B cell (primary cell): ENCODE measurements at regions of chr6 and their contacts with region 1.

Region 1: GRCh38 chr6:33271458-33272274 is at the starts of genes RPS18 and VPS52:
- DNase-seq: peak; percentile 99
- ATAC-seq: peak; percentile 86
- H3K4me3 ChIP-seq: peak within 1 kb of the TSS; percentile 81 to 95 (median 86)
- H3K4me3 Mint-ChIP-seq: peak within 1 kb of the TSS; percentile 94
- H3K27ac ChIP-seq: peak within 1 kb of the TSS; percentile 89 to 94
- H3K27ac Mint-ChIP-seq: peak within 1 kb of the TSS; percentile 99
- H3K4me1 ChIP-seq: peaks cover 47 to 54% of the 10 kb centered on the region in 2 donors
- H3K4me1 Mint-ChIP-seq: peaks cover 62% of the 10 kb centered on the region
- H3K27me3 ChIP-seq: no peaks in the 10 kb centered on the region
- H3K27me3 Mint-ChIP-seq: no peaks in the 10 kb centered on the region
- CTCF ChIP-seq: no peak
- total RNA-seq, gene RPS18: 3,593 and 3,830 TPM in 2 replicates
- total RNA-seq, gene VPS52: 100 and 108 TPM in 2 replicates

Region 2: DNA sequence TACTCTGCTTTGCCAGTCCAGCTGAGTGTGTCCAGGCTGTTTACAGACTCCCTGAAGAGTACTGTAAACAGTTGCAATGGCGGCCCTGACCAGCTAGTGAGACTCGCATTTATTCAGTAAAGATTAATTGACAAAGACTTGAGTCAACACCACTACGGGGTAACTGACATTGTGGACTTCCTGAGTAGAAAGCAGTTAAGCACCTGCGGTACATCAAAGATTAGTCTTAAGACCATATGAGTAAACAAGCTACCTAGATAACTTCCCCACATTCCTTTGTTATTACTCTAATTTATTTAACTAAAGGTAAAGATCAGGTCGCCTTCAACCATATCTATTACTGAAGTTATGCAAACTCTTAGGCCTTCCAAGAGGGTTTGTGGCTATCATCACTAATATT is 12.6 kb before region 1 on chr6:
- CTCF ChIA-PET with region 1: interaction called, 3 read pairs
- POLR2A ChIA-PET with region 1: interaction called, 17 read pairs
- intact Hi-C with region 1: no loop called
- DNase-seq: no peak
- ATAC-seq: no peak
- H3K4me3 ChIP-seq: no peak overlapping the region
- H3K4me3 Mint-ChIP-seq: no peak overlapping the region
- H3K27ac ChIP-seq: no peak overlapping the region
- H3K27ac Mint-ChIP-seq: no peak overlapping the region
- H3K4me1 ChIP-seq: no peaks in the 10 kb centered on the region
- H3K4me1 Mint-ChIP-seq: no peaks in the 10 kb centered on the region
- H3K27me3 ChIP-seq: no peaks in the 10 kb centered on the region
- H3K27me3 Mint-ChIP-seq: no peaks in the 10 kb centered on the region
- CTCF ChIP-seq: no peak

Region 3: GRCh38 chr6:33299237-33299944 is 27.7 kb after region 1 on chr6:
- CTCF ChIA-PET with region 1: interaction called, 32 read pairs
- POLR2A ChIA-PET with region 1: interaction called, 19 read pairs
- intact Hi-C with region 1: loop called (anchors 1 kb)
- DNase-seq: peak; percentile 95
- ATAC-seq: peak; percentile 68
- H3K4me3 ChIP-seq: peak overlapping the region; percentile 71 to 96 (median 79)
- H3K4me3 Mint-ChIP-seq: peak overlapping the region; percentile 99
- H3K27ac ChIP-seq: peak overlapping the region; percentile 86 to 91
- H3K27ac Mint-ChIP-seq: peak overlapping the region; percentile 99
- H3K4me1 ChIP-seq: peaks cover 12 to 24% of the 10 kb centered on the region in 2 donors
- H3K4me1 Mint-ChIP-seq: peaks cover 38% of the 10 kb centered on the region
- H3K27me3 ChIP-seq: no peaks in the 10 kb centered on the region
- H3K27me3 Mint-ChIP-seq: no peaks in the 10 kb centered on the region
- CTCF ChIP-seq: peak; percentile 69

Region 4: GRCh38 chr6:33410050-33410710 is 138.5 kb after region 1 on chr6:
- CTCF ChIA-PET with region 1: no interaction called
- POLR2A ChIA-PET with region 1: interaction called, 3 read pairs
- intact Hi-C with region 1: loop called (anchors 1 kb)
- DNase-seq: peak; percentile 98
- ATAC-seq: peak; percentile 74
- H3K4me3 ChIP-seq: peak overlapping the region; percentile 63 to 91 (median 84)
- H3K4me3 Mint-ChIP-seq: peak overlapping the region; percentile 87
- H3K27ac ChIP-seq: peak overlapping the region; percentile 96 to 98
- H3K27ac Mint-ChIP-seq: peak overlapping the region; percentile 94
- H3K4me1 ChIP-seq: peaks cover 37 to 52% of the 10 kb centered on the region in 2 donors
- H3K4me1 Mint-ChIP-seq: peaks cover 47% of the 10 kb centered on the region
- H3K27me3 ChIP-seq: no peaks in the 10 kb centered on the region
- H3K27me3 Mint-ChIP-seq: no peaks in the 10 kb centered on the region
- CTCF ChIP-seq: no peak

Region 5: GRCh38 chr6:33579828-33580714 is 308.4 kb after region 1 on chr6 and contains the start of gene BAK1:
- CTCF ChIA-PET with region 1: no interaction called
- POLR2A ChIA-PET with region 1: no interaction called
- intact Hi-C with region 1: loop called (anchors 5 kb)
- DNase-seq: peak; percentile 89
- ATAC-seq: peak; percentile 98
- H3K4me3 ChIP-seq: peak within 1 kb of the TSS; percentile 65 to 87 (median 71)
- H3K4me3 Mint-ChIP-seq: peak within 1 kb of the TSS; percentile 95
- H3K27ac ChIP-seq: peak within 1 kb of the TSS; percentile 73 to 89
- H3K27ac Mint-ChIP-seq: peak within 1 kb of the TSS; percentile 95
- H3K4me1 ChIP-seq: peaks cover 23 to 39% of the 10 kb centered on the region in 2 donors
- H3K4me1 Mint-ChIP-seq: peaks cover 35% of the 10 kb centered on the region
- H3K27me3 ChIP-seq: no peaks in the 10 kb centered on the region
- H3K27me3 Mint-ChIP-seq: no peaks in the 10 kb centered on the region
- CTCF ChIP-seq: peak; percentile 56
- total RNA-seq, gene BAK1: 22.6 and 23.3 TPM in 2 replicates